Naive thymus-derived CD4-positive, alpha-beta T cell (primary cell): ENCODE measurements at regions of chr2 and their contacts with region 1.

Region 1: GRCh38 chr2:105576440-105577252 is 168.1 kb upstream of the NCK2 start:
- DNase-seq: peak in 7 of 9 donors; percentile 24 to 70 (median 50)
- ATAC-seq: peak; percentile 73
- H3K4me3 ChIP-seq: no peak overlapping the region
- H3K4me3 Mint-ChIP-seq: peak overlapping the region in 5 of 10 donors; percentile 1 to 41 (median 26)
- H3K27ac ChIP-seq: peak overlapping the region; percentile 39
- H3K27ac Mint-ChIP-seq: peak overlapping the region; percentile 74 to 95 (median 89)
- H3K4me1 ChIP-seq: peaks cover 3 to 16% of the 10 kb centered on the region in 2 donors
- H3K4me1 Mint-ChIP-seq: peaks cover 13 to 30% (median 20%) of the 10 kb centered on the region in 7 donors
- H3K27me3 ChIP-seq: no peaks in the 10 kb centered on the region
- H3K27me3 Mint-ChIP-seq: peaks cover 0 to 7% (median 0%) of the 10 kb centered on the region in 5 donors

Region 2: DNA sequence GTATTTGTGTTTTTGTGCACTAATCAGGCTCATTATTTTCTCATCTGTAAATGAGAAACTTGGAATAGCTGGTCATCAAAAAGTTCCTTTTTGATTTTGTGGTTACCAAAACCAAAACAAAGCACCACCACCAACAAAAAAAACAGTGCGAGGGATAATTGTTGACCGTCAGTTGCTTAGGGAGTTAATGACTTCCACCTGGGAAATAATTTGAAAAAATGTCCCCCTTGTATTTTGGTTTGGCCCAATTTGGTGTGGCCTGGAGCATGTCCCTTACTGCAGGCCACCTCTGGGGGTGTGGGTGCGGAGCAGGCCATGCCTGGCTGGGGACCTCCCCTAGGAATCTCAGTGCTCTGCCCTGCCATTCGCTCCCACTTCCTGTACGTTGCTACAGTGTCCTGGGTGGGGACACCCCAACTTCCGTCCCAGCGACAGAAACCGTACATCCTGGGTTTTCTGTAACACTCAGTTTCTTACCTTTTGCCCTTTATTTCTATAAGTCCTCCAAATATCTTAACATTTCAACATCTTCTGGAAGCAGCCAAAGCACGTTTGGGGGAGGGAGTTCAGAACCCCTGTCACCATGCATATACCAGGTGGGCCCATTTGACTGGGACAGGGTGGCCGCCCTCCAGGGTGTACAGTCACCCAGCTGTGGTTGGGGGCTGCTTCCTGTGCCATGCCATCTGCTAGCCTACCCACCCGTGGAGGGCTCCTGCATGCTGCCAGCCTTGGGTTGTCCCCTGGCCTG is 199.3 kb after region 1 on chr2:
- CTCF ChIA-PET with region 1: interaction called, 10 read pairs
- POLR2A ChIA-PET with region 1: no interaction called
- intact Hi-C with region 1: loop called in 1 of 2 experiments (anchors 1 kb)
- DNase-seq: peak in 5 of 9 donors; percentile 36 to 48 (median 41)
- ATAC-seq: peak; percentile 71
- H3K4me3 ChIP-seq: peak overlapping the region; percentile 53
- H3K4me3 Mint-ChIP-seq: peak overlapping the region; percentile 71 to 93 (median 84)
- H3K27ac ChIP-seq: peak overlapping the region; percentile 85
- H3K27ac Mint-ChIP-seq: peak overlapping the region; percentile 83 to 98 (median 92)
- H3K4me1 ChIP-seq: peaks cover 87 to 88% of the 10 kb centered on the region in 2 donors
- H3K4me1 Mint-ChIP-seq: peaks cover 79 to 97% (median 95%) of the 10 kb centered on the region in 7 donors
- H3K27me3 ChIP-seq: no peaks in the 10 kb centered on the region
- H3K27me3 Mint-ChIP-seq: no peaks in the 10 kb centered on the region

Region 3: GRCh38 chr2:105858868-105859693 is 282.4 kb after region 1 on chr2:
- CTCF ChIA-PET with region 1: interaction called, 3 read pairs
- POLR2A ChIA-PET with region 1: no interaction called
- intact Hi-C with region 1: loop called in 1 of 2 experiments (anchors 1 kb)
- DNase-seq: peak in 1 of 9 donors; percentile 45
- ATAC-seq: no peak
- H3K4me3 ChIP-seq: no peak overlapping the region
- H3K4me3 Mint-ChIP-seq: peak overlapping the region; percentile 49 to 91 (median 80)
- H3K27ac ChIP-seq: peak overlapping the region; percentile 66
- H3K27ac Mint-ChIP-seq: peak overlapping the region; percentile 80 to 98 (median 92)
- H3K4me1 ChIP-seq: peaks cover 71 to 91% of the 10 kb centered on the region in 2 donors
- H3K4me1 Mint-ChIP-seq: peaks cover 54 to 97% (median 94%) of the 10 kb centered on the region in 7 donors
- H3K27me3 ChIP-seq: no peaks in the 10 kb centered on the region
- H3K27me3 Mint-ChIP-seq: no peaks in the 10 kb centered on the region

Region 4: GRCh38 chr2:105950521-105951383 is 374.1 kb after region 1 on chr2:
- CTCF ChIA-PET with region 1: no interaction called
- POLR2A ChIA-PET with region 1: interaction called, 3 read pairs
- intact Hi-C with region 1: loop called in 1 of 2 experiments (anchors 10 kb)
- DNase-seq: peak in 1 of 9 donors; percentile 24
- ATAC-seq: no peak
- H3K4me3 ChIP-seq: no peak overlapping the region
- H3K4me3 Mint-ChIP-seq: peak overlapping the region in 9 of 10 donors; percentile 1 to 70 (median 39)
- H3K27ac ChIP-seq: no peak overlapping the region
- H3K27ac Mint-ChIP-seq: peak overlapping the region in 7 of 9 donors; percentile 26 to 87 (median 56)
- H3K4me1 ChIP-seq: peaks cover 5 to 46% of the 10 kb centered on the region in 2 donors
- H3K4me1 Mint-ChIP-seq: peaks cover 30 to 80% (median 71%) of the 10 kb centered on the region in 7 donors
- H3K27me3 ChIP-seq: no peaks in the 10 kb centered on the region
- H3K27me3 Mint-ChIP-seq: peaks cover 0 to 8% (median 0%) of the 10 kb centered on the region in 5 donors

Region 5: GRCh38 chr2:106085181-106085940 is 508.7 kb after region 1 on chr2:
- CTCF ChIA-PET with region 1: interaction called, 16 read pairs
- POLR2A ChIA-PET with region 1: interaction called, 5 read pairs
- intact Hi-C with region 1: loop called in 1 of 2 experiments (anchors 1 kb)
- DNase-seq: peak in 7 of 9 donors; percentile 57 to 76 (median 70)
- ATAC-seq: peak; percentile 90
- H3K4me3 ChIP-seq: peak overlapping the region; percentile 6
- H3K4me3 Mint-ChIP-seq: peak overlapping the region; percentile 47 to 83 (median 69)
- H3K27ac ChIP-seq: peak overlapping the region; percentile 64
- H3K27ac Mint-ChIP-seq: peak overlapping the region; percentile 79 to 97 (median 93)
- H3K4me1 ChIP-seq: peaks cover 37 to 59% of the 10 kb centered on the region in 2 donors
- H3K4me1 Mint-ChIP-seq: peaks cover 27 to 97% (median 76%) of the 10 kb centered on the region in 7 donors
- H3K27me3 ChIP-seq: no peaks in the 10 kb centered on the region
- H3K27me3 Mint-ChIP-seq: peaks cover 0 to 6% (median 0%) of the 10 kb centered on the region in 5 donors

Region 6: GRCh38 chr2:106542811-106543259 is 966.2 kb after region 1 on chr2:
- CTCF ChIA-PET with region 1: no interaction called
- POLR2A ChIA-PET with region 1: no interaction called
- intact Hi-C with region 1: loop called in 1 of 2 experiments (anchors 1 kb)
- DNase-seq: peak; percentile 43 to 77 (median 62)
- ATAC-seq: peak; percentile 95
- H3K4me3 ChIP-seq: no peak overlapping the region
- H3K4me3 Mint-ChIP-seq: peak overlapping the region; percentile 48 to 90 (median 80)
- H3K27ac ChIP-seq: no peak overlapping the region
- H3K27ac Mint-ChIP-seq: peak overlapping the region in 2 of 9 donors; percentile 67 to 80
- H3K4me1 ChIP-seq: no peaks in the 10 kb centered on the region
- H3K4me1 Mint-ChIP-seq: peaks cover 0 to 5% (median 4%) of the 10 kb centered on the region in 7 donors
- H3K27me3 ChIP-seq: no peaks in the 10 kb centered on the region
- H3K27me3 Mint-ChIP-seq: peaks cover 16 to 35% (median 19%) of the 10 kb centered on the region in 5 donors